CD4-positive, alpha-beta memory T cell (primary cell): ENCODE measurements at regions of chr4 and their contacts with region 1.

Region 1: GRCh38 chr4:7067452-7068278 is at the start of gene GRPEL1:
- DNase-seq: peak; percentile 100
- H3K4me3 ChIP-seq: peak within 1 kb of the TSS; percentile 65 to 84
- H3K4me3 Mint-ChIP-seq: peak within 1 kb of the TSS; percentile 93 to 98 (median 96)
- H3K27ac ChIP-seq: peak within 1 kb of the TSS; percentile 69
- H3K27ac Mint-ChIP-seq: peak within 1 kb of the TSS; percentile 82 to 98 (median 96)
- H3K4me1 ChIP-seq: peaks cover 46% of the 10 kb centered on the region
- H3K4me1 Mint-ChIP-seq: peaks cover 20 to 65% (median 45%) of the 10 kb centered on the region in 4 donors
- H3K27me3 ChIP-seq: no peaks in the 10 kb centered on the region
- H3K27me3 Mint-ChIP-seq: peaks cover 0 to 2% of the 10 kb centered on the region in 2 donors
- total RNA-seq, gene GRPEL1: 35.3 to 36.0 TPM

Region 2: GRCh38 chr4:6640292-6641163 is 427.1 kb before region 1 on chr4 and contains the start of gene MRFAP1:
- CTCF ChIA-PET with region 1: interaction called, 4 read pairs
- POLR2A ChIA-PET with region 1: interaction called, 18 read pairs
- intact Hi-C with region 1: loop called (anchors 1 kb)
- DNase-seq: peak; percentile 94 to 97 (median 95)
- H3K4me3 ChIP-seq: peak within 1 kb of the TSS; percentile 90 to 92
- H3K4me3 Mint-ChIP-seq: peak within 1 kb of the TSS; percentile 96 to 100 (median 98)
- H3K27ac ChIP-seq: peak within 1 kb of the TSS; percentile 98
- H3K27ac Mint-ChIP-seq: peak within 1 kb of the TSS; percentile 98 to 100 (median 99)
- H3K4me1 ChIP-seq: peaks cover 31% of the 10 kb centered on the region
- H3K4me1 Mint-ChIP-seq: peaks cover 29 to 40% (median 34%) of the 10 kb centered on the region in 4 donors
- H3K27me3 ChIP-seq: no peaks in the 10 kb centered on the region
- H3K27me3 Mint-ChIP-seq: no peaks in the 10 kb centered on the region
- total RNA-seq, gene MRFAP1: 149 to 157 TPM

Region 3: GRCh38 chr4:6709230-6710114 is 358.2 kb before region 1 on chr4 and contains the start of gene MRFAP1L1:
- CTCF ChIA-PET with region 1: no interaction called
- POLR2A ChIA-PET with region 1: interaction called, 10 read pairs
- intact Hi-C with region 1: no loop called
- DNase-seq: peak; percentile 96 to 98 (median 97)
- H3K4me3 ChIP-seq: peak within 1 kb of the TSS; percentile 74 to 84
- H3K4me3 Mint-ChIP-seq: peak within 1 kb of the TSS; percentile 97 to 100 (median 99)
- H3K27ac ChIP-seq: peak within 1 kb of the TSS; percentile 95
- H3K27ac Mint-ChIP-seq: peak within 1 kb of the TSS; percentile 99 to 100 (median 99)
- H3K4me1 ChIP-seq: peaks cover 51% of the 10 kb centered on the region
- H3K4me1 Mint-ChIP-seq: peaks cover 44 to 71% (median 55%) of the 10 kb centered on the region in 4 donors
- H3K27me3 ChIP-seq: no peaks in the 10 kb centered on the region
- H3K27me3 Mint-ChIP-seq: no peaks in the 10 kb centered on the region
- total RNA-seq, gene MRFAP1L1: 127 to 134 TPM

Region 4: GRCh38 chr4:6873792-6874461 is 193.7 kb before region 1 on chr4:
- CTCF ChIA-PET with region 1: interaction called, 23 read pairs
- POLR2A ChIA-PET with region 1: interaction called, 3 read pairs
- intact Hi-C with region 1: loop called (anchors 1 kb)
- DNase-seq: peak; percentile 70 to 80 (median 72)
- H3K4me3 ChIP-seq: no peak overlapping the region
- H3K4me3 Mint-ChIP-seq: no peak overlapping the region
- H3K27ac ChIP-seq: no peak overlapping the region
- H3K27ac Mint-ChIP-seq: peak overlapping the region in 5 of 7 donors; percentile 32 to 76 (median 52)
- H3K4me1 ChIP-seq: no peaks in the 10 kb centered on the region
- H3K4me1 Mint-ChIP-seq: peaks cover 0 to 6% (median 2%) of the 10 kb centered on the region in 4 donors
- H3K27me3 ChIP-seq: no peaks in the 10 kb centered on the region
- H3K27me3 Mint-ChIP-seq: no peaks in the 10 kb centered on the region

Region 5: DNA sequence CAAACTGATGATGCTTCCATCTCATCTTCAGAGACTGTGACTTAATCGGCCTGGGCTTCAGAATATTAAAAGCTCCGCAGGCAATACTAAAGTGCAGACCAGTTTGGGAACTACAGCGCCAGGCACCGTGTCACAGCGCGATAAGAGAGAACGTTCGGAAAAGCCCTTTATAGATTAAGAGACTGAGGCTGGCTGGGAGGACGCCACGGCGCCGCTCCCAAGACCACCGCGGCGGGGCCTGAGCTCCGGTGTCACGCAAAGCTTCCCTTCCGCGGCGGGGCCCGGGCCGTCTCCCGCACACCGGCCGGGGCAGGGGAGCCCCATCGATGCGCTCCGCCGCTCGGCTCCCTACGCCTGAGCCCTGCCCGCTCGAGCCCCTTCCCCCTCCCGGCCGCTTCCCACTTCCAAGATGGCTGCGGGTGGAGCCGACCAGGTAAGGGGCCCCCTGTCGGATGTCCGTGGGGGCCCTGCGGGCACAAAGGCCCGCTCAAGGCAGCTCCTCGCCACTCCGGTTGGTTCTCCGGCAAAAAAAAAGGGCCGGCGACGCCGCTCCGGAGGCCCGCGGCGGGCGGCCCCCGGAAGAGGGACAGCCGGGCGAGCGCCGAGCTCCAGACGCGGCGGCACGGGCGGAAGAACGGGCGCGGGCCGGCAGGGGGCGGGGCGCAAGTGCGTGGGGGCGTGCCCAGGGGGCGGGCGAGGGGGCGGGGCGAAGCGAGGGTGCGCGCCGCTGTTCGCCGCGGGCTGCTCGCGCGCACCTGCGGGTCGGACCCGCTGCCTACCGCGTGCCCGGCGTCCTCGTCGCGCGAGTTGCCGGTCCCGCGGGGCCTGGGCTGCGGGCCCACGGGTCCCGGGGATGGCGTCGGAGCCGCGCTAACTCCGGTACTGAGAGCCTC is 158.3 kb before region 1 on chr4 and contains the start of gene TBC1D14:
- CTCF ChIA-PET with region 1: interaction called, 89 read pairs
- POLR2A ChIA-PET with region 1: interaction called, 67 read pairs
- intact Hi-C with region 1: loop called (anchors 1 kb)
- DNase-seq: peak; percentile 88 to 92 (median 90)
- H3K4me3 ChIP-seq: peak within 1 kb of the TSS; percentile 77 to 78
- H3K4me3 Mint-ChIP-seq: peak within 1 kb of the TSS; percentile 90 to 95 (median 91)
- H3K27ac ChIP-seq: peak within 1 kb of the TSS; percentile 81
- H3K27ac Mint-ChIP-seq: peak within 1 kb of the TSS; percentile 88 to 96 (median 91)
- H3K4me1 ChIP-seq: peaks cover 63% of the 10 kb centered on the region
- H3K4me1 Mint-ChIP-seq: peaks cover 30 to 67% (median 52%) of the 10 kb centered on the region in 4 donors
- H3K27me3 ChIP-seq: no peaks in the 10 kb centered on the region
- H3K27me3 Mint-ChIP-seq: no peaks in the 10 kb centered on the region
- total RNA-seq, gene TBC1D14: 73.7 to 80.7 TPM

Region 6: DNA sequence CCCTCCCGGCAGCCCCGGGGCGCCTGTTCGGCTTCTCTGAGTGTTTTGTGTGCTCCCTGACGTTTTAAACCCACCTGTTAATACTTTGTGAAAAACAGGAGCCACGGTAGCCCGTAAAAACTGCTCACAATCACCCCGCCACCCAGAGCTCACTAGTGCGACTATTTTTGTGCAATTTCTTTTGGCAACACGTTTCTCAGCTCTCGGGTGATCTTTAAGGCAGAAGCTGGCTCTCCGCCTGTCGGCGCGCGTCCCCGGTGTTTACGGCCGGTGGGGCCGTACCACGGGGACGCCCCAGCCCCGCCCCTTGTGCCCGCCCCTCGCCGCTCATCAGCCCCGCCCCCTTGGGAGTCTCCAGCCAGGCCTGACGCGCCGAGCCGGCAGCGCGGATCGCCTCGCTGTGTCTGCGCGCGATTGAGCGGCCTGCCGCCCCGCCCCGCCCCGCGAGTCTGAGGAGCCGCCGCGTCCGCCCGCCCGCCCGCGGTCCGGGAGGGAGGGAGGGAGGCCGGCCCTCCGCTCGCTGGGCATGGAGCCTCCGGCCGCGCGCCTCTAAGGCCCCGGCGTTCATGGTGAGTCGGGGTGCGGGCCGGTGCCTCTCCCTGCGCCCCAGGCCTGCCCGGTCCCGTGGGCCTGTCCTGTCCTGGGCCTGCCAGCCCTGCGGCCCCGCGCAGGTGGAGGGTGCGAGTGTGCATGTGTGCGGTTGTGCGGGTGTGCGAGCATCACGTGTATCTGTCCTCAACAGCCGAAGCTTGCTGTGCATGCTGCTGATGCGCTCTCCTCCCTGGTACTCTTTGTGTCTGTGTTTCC is 80.7 kb before region 1 on chr4:
- CTCF ChIA-PET with region 1: interaction called, 22 read pairs
- POLR2A ChIA-PET with region 1: interaction called, 45 read pairs
- intact Hi-C with region 1: loop called (anchors 1 kb)
- DNase-seq: peak; percentile 90 to 93 (median 92)
- H3K4me3 ChIP-seq: peak overlapping the region; percentile 65 to 83
- H3K4me3 Mint-ChIP-seq: peak overlapping the region; percentile 94 to 99 (median 95)
- H3K27ac ChIP-seq: peak overlapping the region; percentile 90
- H3K27ac Mint-ChIP-seq: peak overlapping the region; percentile 95 to 98 (median 96)
- H3K4me1 ChIP-seq: peaks cover 78% of the 10 kb centered on the region
- H3K4me1 Mint-ChIP-seq: peaks cover 57 to 86% (median 70%) of the 10 kb centered on the region in 4 donors
- H3K27me3 ChIP-seq: no peaks in the 10 kb centered on the region
- H3K27me3 Mint-ChIP-seq: no peaks in the 10 kb centered on the region

Region 7: DNA sequence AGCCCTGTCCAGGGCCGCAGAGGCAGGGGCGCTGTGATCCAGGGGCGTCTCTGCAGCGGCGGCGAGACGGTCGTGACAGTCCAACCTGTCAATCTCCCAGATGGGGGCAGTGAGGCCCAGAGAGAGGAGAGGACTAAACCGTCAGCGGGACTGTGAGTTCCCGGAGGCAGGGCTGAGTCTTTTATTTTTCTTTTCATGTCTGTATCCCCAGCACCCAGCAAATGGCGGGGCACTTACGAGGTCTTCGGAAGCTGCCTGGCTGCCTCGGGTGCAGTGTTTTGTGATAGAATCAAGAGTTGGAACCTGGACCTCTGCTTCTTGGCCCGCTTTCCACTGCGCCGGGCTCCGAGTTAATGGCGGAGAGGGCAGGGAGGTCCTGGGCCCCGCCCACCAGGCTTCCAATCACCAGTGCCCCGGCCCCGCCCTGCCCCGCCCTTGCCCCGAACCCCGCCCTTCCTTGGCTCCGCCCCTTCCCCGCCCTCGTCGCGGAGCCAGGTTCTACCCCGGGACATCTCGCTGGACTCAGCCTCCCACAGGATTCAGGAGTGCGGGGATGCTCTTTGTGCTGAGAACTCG is 35.5 kb after region 1 on chr4:
- CTCF ChIA-PET with region 1: interaction called, 6 read pairs
- POLR2A ChIA-PET with region 1: interaction called, 4 read pairs
- intact Hi-C with region 1: loop called (anchors 1 kb)
- DNase-seq: peak; percentile 70 to 82 (median 76)
- H3K4me3 ChIP-seq: peak overlapping the region; percentile 39 to 69
- H3K4me3 Mint-ChIP-seq: peak overlapping the region; percentile 90 to 94 (median 92)
- H3K27ac ChIP-seq: peak overlapping the region; percentile 54
- H3K27ac Mint-ChIP-seq: peak overlapping the region; percentile 22 to 91 (median 87)
- H3K4me1 ChIP-seq: peaks cover 21% of the 10 kb centered on the region
- H3K4me1 Mint-ChIP-seq: peaks cover 9 to 25% (median 16%) of the 10 kb centered on the region in 4 donors
- H3K27me3 ChIP-seq: no peaks in the 10 kb centered on the region
- H3K27me3 Mint-ChIP-seq: no peaks in the 10 kb centered on the region